ENCODE measurements at regions of chr7 and their contacts with region 1.

Region 1: GRCh38 chr7:133423618-133424017 is 170.7 kb downstream of the EXOC4 start:
- DNase-seq: no peak
- H3K4me3 ChIP-seq: no peak overlapping the region
- H3K27ac ChIP-seq: no peak overlapping the region
- H3K4me1 ChIP-seq: no peaks in the 10 kb centered on the region
- H3K27me3 ChIP-seq: no peaks in the 10 kb centered on the region

Region 2: DNA sequence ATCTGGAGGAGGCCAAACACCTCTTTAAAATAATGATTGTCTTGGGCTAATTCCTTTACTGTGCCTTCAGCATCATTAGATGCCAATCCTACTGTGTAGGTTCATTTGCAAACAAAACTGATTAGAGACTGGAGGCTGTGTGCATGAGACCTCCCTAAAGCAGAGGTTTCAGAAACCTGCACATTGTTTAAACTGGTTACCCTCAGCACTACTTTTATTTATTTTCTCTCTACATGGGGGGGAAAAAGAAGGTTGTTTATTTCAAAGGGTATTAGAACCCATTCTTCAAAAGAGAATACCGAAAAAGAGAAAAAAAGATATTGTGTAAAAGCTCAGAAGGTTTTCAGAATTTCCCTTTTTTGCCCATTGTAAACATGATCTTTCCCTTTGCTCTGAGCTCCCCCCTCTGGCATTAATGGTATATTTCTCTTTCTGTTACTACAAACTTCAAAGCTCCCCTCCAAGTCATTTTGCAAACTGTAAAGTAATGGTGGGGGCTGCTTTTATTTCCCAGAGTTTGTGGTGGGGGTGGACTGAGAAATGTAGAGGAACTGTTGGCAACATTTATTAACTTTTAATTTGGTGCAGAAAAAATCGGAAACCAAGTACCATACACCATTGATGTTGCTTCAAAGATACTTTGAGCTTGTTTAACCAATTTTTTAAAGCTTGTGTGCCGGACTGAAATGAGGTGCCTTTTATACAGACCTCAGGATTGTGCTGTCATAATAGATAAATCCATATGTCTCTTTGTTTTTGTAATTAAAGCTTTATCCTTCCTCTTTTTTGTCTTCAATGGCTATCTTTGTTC is 10.6 kb after region 1 on chr7:
- CTCF ChIA-PET with region 1: interaction called, 14 read pairs
- POLR2A ChIA-PET with region 1: no interaction called
- DNase-seq: peak; percentile 38 to 70 (median 61)
- H3K4me3 ChIP-seq: no peak overlapping the region
- H3K27ac ChIP-seq: no peak overlapping the region
- H3K4me1 ChIP-seq: no peaks in the 10 kb centered on the region
- H3K27me3 ChIP-seq: no peaks in the 10 kb centered on the region

Measured in common myeloid progenitor, CD34-positive (primary cell).